Sciatic nerve (tissue), 2 donors: ENCODE measurements at regions of chr1 and their contacts with region 1.

Region 1: DNA sequence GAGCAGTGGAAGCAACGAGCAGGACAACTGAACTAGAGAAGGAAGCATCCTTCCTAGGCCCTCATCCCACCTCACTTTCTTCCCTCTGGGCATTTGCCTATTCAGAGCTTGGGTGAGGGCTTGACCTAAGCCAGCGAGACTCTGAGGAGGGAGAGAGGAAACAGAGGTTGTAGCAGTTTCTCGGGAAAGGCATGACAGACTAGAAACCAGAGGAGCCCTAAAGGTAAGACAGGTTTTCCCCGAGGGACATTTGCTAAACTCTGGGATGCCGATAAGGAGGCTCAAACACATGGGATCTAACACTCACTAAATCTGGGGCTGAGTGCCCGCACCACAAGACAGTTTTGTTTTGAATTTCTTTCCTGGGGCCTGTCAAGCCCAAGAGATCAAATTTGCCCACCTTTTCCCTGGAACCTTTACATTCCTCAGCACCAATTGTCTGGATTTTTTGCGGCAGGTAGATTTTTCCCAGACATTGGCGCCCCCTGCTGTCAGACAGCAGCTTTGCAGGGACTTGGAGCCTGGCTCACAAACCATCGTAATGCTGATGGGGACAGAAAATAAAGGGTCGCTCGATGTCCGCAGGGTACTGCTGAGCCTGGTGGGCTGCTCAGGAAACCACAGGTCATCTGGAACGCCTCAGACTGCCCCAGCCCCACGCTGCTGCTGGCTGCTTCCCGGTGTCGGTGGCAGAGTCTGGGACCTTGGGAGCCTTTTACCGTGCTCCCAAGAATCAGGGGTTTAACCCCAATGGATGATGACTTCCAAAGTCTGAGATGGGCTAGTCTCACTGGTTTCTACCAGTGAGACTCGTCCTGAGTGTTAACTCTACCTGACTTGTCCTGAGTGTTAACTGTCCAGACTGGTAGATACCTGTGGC is 23.4 kb upstream of the TSPAN2 start:
- DNase-seq: peak; percentile 67
- ATAC-seq: peak; percentile 35

Region 2: DNA sequence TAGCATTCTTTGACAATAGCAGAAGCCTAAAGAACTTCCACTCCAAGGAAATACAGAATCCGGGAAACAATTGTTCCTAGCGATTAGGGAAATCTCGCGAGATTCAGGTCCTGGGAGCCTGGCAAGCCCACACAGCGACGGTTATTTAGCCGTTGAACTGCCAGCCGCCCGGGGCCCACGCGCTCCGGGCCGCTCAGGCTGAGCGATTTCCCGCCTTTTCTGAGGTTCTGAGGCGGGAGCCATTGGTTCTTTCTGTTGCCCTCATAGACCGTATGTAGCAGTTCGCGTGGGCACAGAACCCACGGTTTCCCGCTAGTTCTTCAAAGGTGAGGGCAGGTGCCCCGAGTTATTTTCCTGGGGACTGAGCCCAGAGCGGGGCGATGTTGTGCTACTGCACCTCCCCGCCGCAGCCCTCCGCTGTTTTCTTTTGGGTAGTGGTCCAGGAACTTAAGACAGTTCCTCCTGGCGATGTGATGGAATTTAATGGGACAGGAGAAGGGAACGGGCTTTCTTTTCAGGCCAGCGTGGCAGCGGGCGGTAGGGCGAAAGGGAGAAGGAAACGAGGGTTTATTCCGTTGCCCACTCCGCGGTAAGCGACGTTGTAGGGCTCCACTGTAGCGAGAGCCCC is 257.9 kb before region 1 on chr1 and contains the start of gene SYCP1:
- intact Hi-C with region 1: no loop called
- DNase-seq: no peak
- ATAC-seq: no peak
- total RNA-seq, gene SYCP1: not detected

Region 3: DNA sequence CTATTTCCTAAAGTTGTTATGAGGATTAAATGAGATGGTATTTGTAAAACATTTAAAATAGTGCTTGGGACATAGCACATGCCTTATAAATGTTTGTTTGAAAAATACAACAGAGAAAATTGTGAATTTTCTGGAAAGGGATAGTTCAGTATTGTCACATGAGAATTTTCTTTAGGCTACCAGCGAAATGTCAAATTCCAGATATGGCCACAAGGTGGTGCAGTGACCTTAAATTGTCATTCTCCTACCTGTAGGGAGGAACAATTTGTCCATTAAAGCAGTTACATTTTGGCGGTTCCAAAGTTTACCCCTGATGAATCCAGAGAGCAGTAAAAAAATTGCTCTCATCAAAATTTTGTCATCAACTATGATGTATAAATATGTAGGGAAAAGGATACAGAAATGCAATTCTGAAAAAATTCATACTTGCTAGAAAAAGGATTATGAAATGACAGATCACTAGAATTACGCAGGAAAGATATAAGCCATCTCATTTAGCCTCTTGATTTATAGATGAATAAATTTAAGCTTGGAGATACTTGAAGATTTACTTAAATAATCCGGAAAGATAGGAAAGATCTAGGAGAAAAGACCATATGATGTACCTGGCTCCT is 133.4 kb before region 1 on chr1:
- intact Hi-C with region 1: loop called (anchors 10 kb)
- DNase-seq: peak; percentile 76
- ATAC-seq: no peak

Region 4: GRCh38 chr1:115411371-115412063 is 298.8 kb after region 1 on chr1:
- intact Hi-C with region 1: no loop called
- DNase-seq: no peak
- ATAC-seq: peak; percentile 89